ENCODE measurements at regions of chr17 and their contacts with region 1.

Region 1: DNA sequence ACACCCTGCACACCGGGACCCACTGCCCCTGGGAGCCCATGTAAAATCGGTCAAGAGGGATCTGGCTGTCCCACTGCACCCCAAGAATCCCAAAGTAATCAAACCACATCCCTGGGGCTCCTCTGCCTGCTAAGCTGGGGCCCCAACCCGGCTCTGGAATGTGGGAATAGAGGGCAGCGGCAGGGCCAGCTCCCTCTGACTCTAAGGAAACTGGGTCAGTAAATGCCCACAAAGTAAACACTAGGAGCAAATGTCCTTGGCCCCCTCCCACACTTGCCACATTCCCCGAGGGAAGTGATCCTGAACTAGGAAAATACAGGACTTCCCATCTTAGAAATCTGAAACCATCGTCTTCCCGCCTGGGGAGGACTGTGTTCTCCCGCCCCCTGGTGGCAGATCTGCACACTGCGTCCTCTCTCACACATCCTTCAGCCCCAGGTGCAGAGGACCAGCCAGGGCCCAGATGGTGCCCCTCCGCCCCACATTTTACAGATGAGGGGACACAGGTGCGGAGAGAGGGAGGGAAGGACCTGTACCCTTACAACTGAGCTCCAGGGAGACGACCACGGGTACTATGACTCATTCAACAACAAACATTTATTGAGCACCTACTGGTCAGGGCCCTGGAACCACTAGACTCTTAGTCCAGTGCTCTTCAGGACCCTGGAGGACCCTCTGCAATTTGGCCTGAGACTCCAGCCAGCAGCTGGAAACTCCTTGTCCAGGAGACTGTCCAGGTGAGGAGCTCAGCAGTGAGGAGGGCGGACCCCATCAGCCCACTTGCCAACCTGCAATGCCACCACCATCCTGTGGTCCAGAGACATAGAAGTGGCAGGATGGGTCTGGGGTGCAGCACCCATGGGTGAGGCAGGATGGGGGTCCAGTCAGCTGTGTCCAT is 10.1 kb downstream of the P3H4 start:
- DNase-seq: no peak
- H3K4me3 ChIP-seq: no peak overlapping the region
- H3K27me3 ChIP-seq: no peaks in the 10 kb centered on the region
- CTCF ChIP-seq: peak; percentile 98

Region 2: DNA sequence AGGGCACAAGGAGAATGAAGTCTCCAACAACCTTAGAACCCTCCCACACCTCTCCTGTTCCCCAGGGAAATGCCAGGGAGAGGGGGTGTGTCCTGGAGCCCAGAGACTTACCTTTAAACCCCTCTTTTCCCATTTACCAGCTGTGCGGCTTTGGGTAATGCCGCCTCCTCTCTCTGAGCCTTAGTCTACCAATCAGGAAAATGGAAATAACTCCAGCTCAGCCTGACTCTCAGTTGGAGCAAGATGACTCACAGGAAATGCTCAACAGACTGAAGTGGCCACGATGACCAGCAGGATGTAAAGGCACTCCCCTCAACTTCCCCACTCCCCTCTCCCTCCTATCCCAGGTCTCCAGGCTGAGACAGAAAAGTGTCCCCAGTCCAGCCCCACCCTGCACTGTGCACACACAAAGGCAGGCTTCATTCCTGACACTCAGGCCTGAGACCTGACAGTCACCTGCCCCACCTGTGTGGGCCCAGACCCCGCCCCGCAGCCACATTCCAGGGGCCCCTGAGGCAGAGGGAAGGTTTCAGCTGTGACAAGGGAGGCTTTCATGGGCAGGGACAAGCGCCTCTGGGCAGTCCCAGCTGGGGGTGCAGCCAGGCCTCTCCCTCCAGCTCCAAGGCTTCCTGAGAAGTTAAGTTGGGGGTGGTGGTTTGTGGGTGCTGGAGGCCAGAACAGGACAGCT is 279.9 kb before region 1 on chr17:
- CTCF ChIA-PET with region 1: no interaction called
- POLR2A ChIA-PET with region 1: no interaction called
- DNase-seq: no peak
- H3K4me3 ChIP-seq: no peak overlapping the region
- H3K27me3 ChIP-seq: no peaks in the 10 kb centered on the region
- CTCF ChIP-seq: 0 out of 2 replicates have a peak, but pooled peaks have one; percentile 2

Region 3: GRCh38 chr17:41750862-41751261 is 50.8 kb before region 1 on chr17:
- CTCF ChIA-PET with region 1: interaction called, 12 read pairs
- POLR2A ChIA-PET with region 1: no interaction called
- DNase-seq: no peak
- H3K4me3 ChIP-seq: no peak overlapping the region
- H3K27me3 ChIP-seq: no peaks in the 10 kb centered on the region
- CTCF ChIP-seq: no peak

Region 4: DNA sequence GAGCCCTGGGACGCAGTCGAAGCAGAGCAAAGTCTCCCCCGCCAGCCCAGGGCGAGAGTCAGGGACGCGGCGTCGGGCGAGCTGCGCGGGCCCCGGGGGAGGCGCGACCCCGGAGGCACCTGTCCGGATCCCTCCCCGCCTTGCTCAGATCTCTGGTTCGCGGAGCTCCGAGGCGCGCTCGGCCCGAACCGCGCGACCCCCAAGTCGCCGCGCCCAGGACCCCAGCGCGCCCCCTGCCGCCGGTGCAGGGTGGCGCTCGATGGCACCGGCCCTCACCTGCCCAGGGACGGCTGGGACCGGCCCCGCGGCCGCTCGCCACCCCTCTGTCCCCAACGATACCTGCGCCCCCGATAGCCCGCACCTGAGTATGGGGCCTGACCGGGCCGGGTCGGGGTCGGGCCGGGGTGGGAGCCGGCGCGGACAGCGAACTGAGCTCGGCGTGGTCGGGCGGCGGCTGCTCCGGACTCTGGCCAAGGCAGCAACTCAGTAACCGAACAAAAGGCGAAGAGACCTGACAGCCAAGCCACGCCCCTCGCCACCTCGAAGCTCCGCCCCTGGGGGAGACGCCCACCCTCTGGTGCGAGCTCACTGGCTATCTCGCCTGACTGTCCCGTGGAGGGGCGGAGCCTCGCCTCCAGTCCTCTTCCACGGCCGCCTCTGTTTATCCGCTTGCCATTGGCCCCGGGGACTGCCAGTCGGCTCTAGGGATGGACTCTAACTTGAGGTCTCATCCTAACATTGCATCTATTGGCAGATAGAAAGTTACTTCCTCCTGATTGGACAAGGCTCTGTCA is 15.2 kb before region 1 on chr17 and contains the start of gene JUP:
- CTCF ChIA-PET with region 1: interaction called, 67 read pairs
- POLR2A ChIA-PET with region 1: interaction called, 5 read pairs
- DNase-seq: peak; percentile 98
- H3K4me3 ChIP-seq: peak within 1 kb of the TSS; percentile 73
- H3K27me3 ChIP-seq: no peaks in the 10 kb centered on the region; the same call in 1 of the 2 replicates
- CTCF ChIP-seq: no peak
- polyA plus RNA-seq, gene JUP: 7.3 and 9.4 TPM in 2 replicates

Region 5: GRCh38 chr17:41811549-41812380 is 10.1 kb after region 1 on chr17 and contains the start of gene P3H4:
- CTCF ChIA-PET with region 1: interaction called, 36 read pairs
- POLR2A ChIA-PET with region 1: no interaction called
- DNase-seq: no peak
- H3K4me3 ChIP-seq: peak within 1 kb of the TSS; percentile 88
- H3K27me3 ChIP-seq: no peaks in the 10 kb centered on the region
- CTCF ChIP-seq: peak; percentile 69
- polyA plus RNA-seq, gene P3H4: 64.4 and 82.8 TPM in 2 replicates

Measured in BJ (cell line).